H1 (cell line): ENCODE measurements at regions of chr22 and their contacts with region 1.

Region 1: DNA sequence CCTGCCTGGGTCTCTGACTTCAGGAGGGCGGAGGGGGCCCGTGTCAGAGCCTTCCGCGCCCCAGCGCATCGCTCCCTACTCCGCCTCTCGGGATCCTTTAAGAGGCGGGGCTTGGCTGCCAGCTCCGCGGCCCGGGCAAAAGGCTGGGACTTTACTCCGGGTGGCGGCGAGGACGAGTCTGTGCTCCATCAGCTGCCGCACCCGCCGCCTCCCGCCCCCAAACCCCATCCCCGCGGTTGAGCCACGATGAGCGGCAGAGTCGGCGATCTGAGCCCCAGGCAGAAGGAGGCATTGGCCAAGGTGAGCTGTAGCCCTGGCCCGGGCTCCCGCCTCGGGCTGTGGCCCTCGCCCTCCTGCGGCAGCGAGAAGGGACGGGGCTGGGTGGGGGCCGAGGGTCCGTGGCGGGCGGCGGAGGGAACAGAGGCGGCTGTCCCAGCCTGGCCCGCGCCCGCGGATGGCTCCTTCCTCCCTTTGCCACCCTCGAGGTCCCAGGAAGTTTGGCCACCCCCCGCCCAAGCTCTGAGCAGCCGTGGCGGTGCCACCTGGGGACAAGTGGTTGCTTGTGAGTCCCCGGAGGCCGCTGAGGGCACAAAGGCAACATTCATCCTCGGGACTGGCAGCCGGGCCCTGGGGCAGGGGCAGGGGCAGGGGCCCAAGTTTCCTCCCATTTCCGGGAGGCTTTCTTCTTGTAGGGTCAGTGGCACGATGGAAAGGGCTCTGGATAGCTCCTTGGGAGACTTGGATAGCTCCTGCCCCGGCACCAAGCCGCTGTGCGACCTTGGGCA is at the start of gene SEC14L2:
- DNase-seq: peak in 1 of 2 experiments; percentile 83
- H3K4me3 ChIP-seq: peak within 1 kb of the TSS; percentile 48 to 74 (median 64)
- H3K27ac ChIP-seq: no peak within 1 kb of the TSS
- H3K4me1 ChIP-seq: peaks cover 6 to 20% (median 10%) of the 10 kb centered on the region in 4 experiments
- H3K27me3 ChIP-seq: peaks cover 2 to 16% (median 8%) of the 10 kb centered on the region in 4 experiments; a peak in 6 of 7 replicates
- CTCF ChIP-seq: no peak
- EP300 ChIP-seq: no peak
- POLR2A ChIP-seq: 0 out of 3 replicates have a peak, but pooled peaks of 1 of the 2 experiments have one; percentile 43
- RAD21 ChIP-seq: no peak
- total RNA-seq, gene SEC14L2: 2.8 and 4.3 TPM in 2 replicates

Region 2: GRCh38 chr22:30413745-30414524 is 16.9 kb after region 1 on chr22:
- CTCF ChIA-PET with region 1: interaction called, 12 read pairs
- POLR2A ChIA-PET with region 1: interaction called, 13 read pairs
- DNase-seq: no peak
- H3K4me3 ChIP-seq: no peak overlapping the region
- H3K27ac ChIP-seq: no peak overlapping the region
- H3K4me1 ChIP-seq: no peaks in the 10 kb centered on the region
- H3K27me3 ChIP-seq: no peaks in the 10 kb centered on the region
- CTCF ChIP-seq: no peak
- EP300 ChIP-seq: no peak
- POLR2A ChIP-seq: no peak
- RAD21 ChIP-seq: no peak